GM10248 (cell line): ENCODE measurements at regions of chr1 and their contacts with region 1.

Region 1: GRCh38 chr1:224851210-224851847 is 78.1 kb upstream of the DNAH14 start:
- DNase-seq: peak; percentile 72
- CTCF ChIP-seq: peak; percentile 79

Region 2: GRCh38 chr1:224513787-224514209 is 337.5 kb before region 1 on chr1:
- CTCF ChIA-PET with region 1: interaction called, 144 read pairs
- POLR2A ChIA-PET with region 1: no interaction called
- DNase-seq: peak; percentile 88
- CTCF ChIP-seq: peak; percentile 93

Region 3: GRCh38 chr1:224673141-224673540 is 178.2 kb before region 1 on chr1:
- CTCF ChIA-PET with region 1: interaction called, 11 read pairs
- POLR2A ChIA-PET with region 1: no interaction called
- DNase-seq: no peak
- CTCF ChIP-seq: no peak

Region 4: GRCh38 chr1:224700915-224701531 is 150.3 kb before region 1 on chr1:
- CTCF ChIA-PET with region 1: interaction called, 109 read pairs
- POLR2A ChIA-PET with region 1: no interaction called
- DNase-seq: peak; percentile 53
- CTCF ChIP-seq: peak; percentile 30

Region 5: DNA sequence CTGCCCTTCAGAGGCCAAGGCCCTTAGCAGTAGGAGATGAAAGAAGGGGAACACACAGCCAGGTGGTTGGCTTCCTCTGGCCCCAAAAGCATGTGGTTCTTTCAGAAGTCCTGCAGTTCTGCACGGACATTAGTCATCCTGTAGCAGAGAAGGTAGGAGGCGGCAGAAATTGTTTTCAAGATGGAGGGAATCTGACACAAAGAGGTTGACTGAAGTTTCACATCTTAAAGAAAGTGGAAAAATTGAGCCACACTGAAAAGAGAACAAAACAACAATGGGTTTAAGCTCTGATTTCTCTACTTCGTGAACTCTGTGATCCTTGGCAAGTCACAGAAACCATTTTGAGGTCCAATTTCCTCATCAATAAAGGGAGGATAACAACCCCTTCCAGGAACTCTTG is 47.1 kb before region 1 on chr1:
- CTCF ChIA-PET with region 1: interaction called, 11 read pairs
- POLR2A ChIA-PET with region 1: no interaction called
- DNase-seq: no peak
- CTCF ChIP-seq: no peak

Region 6: GRCh38 chr1:224863970-224864369 is 12.6 kb after region 1 on chr1:
- CTCF ChIA-PET with region 1: interaction called, 36 read pairs
- POLR2A ChIA-PET with region 1: no interaction called
- DNase-seq: no peak
- CTCF ChIP-seq: no peak